Transverse colon (tissue), 4 donors: ENCODE measurements at regions of chrX and their contacts with region 1.

Region 1: GRCh38 chrX:54639346-54640102 is 109.5 kb downstream of the GNL3L start:
- DNase-seq: peak; percentile 94
- H3K4me3 ChIP-seq: peak overlapping the region; percentile 25 to 53 (median 37)
- H3K27ac ChIP-seq: peak overlapping the region; percentile 75 to 92 (median 89)
- H3K4me1 ChIP-seq: peaks cover 0 to 3% (median 0%) of the 10 kb centered on the region in 4 donors
- H3K27me3 ChIP-seq: no peaks in the 10 kb centered on the region
- CTCF ChIP-seq: peak; percentile 43 to 77 (median 57)
- EP300 ChIP-seq: no peak
- POLR2A ChIP-seq: peak; percentile 62

Region 2: DNA sequence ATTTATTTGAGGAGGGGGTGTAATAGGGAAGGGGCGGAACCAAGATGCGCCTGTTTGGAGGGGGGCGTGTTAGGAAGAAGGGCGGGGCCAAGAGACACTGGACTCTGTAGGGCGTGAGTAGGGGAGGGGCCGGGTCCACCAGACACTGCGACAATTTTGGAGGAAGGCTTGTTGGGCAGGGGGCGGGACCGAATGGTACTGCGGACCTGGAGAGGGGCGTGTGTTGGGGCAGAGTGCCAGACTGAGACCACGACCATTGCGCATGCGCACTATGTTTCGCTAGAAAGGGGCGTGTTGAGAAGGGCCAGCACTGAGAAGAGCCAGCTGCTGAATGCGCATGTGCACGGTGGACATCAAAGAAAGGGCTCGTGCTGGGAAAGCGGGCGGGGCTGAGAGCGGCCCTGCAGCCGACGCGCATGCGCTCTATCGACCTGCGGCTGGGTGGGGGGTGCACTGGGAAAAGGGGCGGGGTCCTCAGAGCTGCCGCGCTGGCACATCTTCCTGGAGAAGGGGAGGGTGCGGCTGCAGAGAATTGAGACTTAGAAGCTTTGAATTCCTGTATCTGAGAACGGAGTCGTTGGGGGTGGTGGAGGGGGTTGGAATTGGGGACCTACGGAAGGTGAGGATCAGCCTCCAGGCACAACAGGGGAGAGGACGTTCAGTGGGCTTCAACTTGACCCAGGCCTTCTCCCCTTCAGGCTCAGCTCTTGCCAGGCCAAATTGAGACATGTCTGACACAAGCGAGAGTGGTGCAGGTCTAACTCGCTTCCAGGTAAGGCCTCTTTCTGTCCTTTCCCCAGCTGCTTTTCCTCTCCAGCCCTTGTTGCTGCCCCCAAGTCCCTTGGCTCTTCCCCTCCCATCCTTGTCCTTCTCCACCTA is 169.3 kb after region 1 on chrX:
- in situ Hi-C with region 1: loop called in 2 of 4 experiments (anchors 25 kb)
- intact Hi-C with region 1: loop called (anchors 5 kb)
- DNase-seq: peak; percentile 94
- H3K4me3 ChIP-seq: peak overlapping the region; percentile 54 to 84 (median 78)
- H3K27ac ChIP-seq: peak overlapping the region; percentile 84 to 93 (median 86)
- H3K4me1 ChIP-seq: peaks cover 3 to 12% (median 8%) of the 10 kb centered on the region in 4 donors
- H3K27me3 ChIP-seq: no peaks in the 10 kb centered on the region
- CTCF ChIP-seq: no peak
- EP300 ChIP-seq: no peak
- POLR2A ChIP-seq: no peak

Region 3: DNA sequence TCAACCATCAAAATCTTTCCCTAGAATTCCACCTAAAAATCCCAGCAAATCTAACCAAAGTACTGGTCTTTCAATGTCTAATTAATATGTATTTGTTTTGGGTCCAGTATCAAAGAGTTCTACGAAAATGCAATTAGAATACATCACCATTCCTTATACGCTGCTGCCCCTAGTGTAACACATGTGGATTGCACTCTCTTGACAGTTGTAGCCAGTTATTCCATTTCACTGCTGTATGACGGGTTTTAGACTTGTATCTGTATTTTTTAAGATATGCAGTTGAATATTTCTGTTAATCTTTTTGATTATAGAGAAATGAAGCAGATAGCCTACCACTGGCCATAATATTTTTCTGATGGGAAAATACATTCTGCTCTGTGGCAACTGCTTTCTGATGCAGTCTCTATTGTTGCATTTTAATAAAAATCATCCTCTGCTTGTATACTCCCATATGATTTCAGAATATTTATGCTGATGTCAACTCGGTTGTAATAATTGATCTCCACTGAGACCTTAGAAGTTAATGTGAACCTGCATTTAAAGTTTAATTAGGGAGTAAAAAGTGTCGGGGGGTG is 418.2 kb after region 1 on chrX:
- in situ Hi-C with region 1: loop called in 2 of 4 experiments (anchors 25 kb)
- intact Hi-C with region 1: no loop called
- DNase-seq: no peak
- H3K4me3 ChIP-seq: peak overlapping the region in 1 of 4 donors; percentile 25
- H3K27ac ChIP-seq: no peak overlapping the region
- H3K4me1 ChIP-seq: no peaks in the 10 kb centered on the region
- H3K27me3 ChIP-seq: no peaks in the 10 kb centered on the region
- CTCF ChIP-seq: peak; percentile 60 to 86 (median 67)
- EP300 ChIP-seq: no peak
- POLR2A ChIP-seq: no peak

Region 4: DNA sequence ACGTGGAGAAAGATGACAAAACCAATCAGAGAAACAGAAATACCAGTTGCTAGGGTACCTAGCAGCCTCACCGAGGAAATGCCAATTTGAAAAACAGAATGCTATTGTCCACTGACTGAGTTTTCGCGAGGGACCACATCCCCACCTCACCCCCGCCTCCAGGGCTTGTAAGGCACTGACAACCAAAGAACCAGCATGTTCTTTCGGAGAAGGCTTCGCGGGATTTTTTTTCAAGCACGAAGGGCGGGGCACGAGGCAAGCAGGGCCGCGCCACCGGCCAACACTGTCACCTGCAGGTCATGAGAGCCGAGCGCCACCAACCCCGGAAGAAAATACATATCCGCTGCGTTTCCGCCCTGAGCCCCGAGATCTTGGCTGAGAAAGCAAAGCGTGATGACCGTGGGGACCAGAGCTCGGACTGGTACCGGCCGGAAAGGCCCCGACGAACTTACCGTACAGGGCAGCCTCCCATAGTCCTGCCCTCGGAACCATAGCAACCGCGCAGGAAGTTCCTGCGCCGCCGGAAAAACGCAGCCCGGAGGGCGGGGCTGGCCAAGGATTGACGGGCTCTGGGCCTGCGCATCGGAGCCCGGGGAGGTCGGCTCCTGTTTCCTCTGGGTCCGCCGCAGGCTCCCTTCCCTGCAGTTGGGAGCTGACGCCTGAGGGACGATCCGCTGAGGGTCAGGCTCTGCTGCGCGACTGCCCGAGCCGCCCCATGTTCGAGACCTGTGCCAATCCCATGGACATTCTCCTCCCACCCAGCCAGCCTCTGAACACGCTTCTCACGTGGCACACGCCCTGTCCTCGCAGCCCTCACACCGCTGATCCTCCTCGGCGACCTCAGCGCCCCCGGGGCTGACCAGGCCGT is 521.4 kb after region 1 on chrX:
- in situ Hi-C with region 1: loop called in 1 of 4 experiments (anchors 25 kb)
- intact Hi-C with region 1: no loop called
- DNase-seq: peak; percentile 91
- H3K4me3 ChIP-seq: peak overlapping the region; percentile 34 to 69 (median 45)
- H3K27ac ChIP-seq: peak overlapping the region; percentile 84 to 92 (median 90)
- H3K4me1 ChIP-seq: peaks cover 0 to 4% (median 2%) of the 10 kb centered on the region in 4 donors
- H3K27me3 ChIP-seq: no peaks in the 10 kb centered on the region
- CTCF ChIP-seq: peak; percentile 22 to 62 (median 45)
- EP300 ChIP-seq: no peak
- POLR2A ChIP-seq: peak; percentile 78